IMR-90 (cell line): ENCODE measurements at regions of chr10 and their contacts with region 1.

Region 1: GRCh38 chr10:92880233-92880861 is 32.0 kb downstream of the EXOC6 start:
- DNase-seq: peak; percentile 63
- ATAC-seq: peak; percentile 92
- H3K4me3 ChIP-seq: no peak overlapping the region
- H3K27ac ChIP-seq: no peak overlapping the region
- H3K4me1 ChIP-seq: no peaks in the 10 kb centered on the region
- H3K27me3 ChIP-seq: no peaks in the 10 kb centered on the region
- CTCF ChIP-seq: peak; percentile 73
- POLR2A ChIP-seq: no peak
- RAD21 ChIP-seq: peak; percentile 74

Region 2: DNA sequence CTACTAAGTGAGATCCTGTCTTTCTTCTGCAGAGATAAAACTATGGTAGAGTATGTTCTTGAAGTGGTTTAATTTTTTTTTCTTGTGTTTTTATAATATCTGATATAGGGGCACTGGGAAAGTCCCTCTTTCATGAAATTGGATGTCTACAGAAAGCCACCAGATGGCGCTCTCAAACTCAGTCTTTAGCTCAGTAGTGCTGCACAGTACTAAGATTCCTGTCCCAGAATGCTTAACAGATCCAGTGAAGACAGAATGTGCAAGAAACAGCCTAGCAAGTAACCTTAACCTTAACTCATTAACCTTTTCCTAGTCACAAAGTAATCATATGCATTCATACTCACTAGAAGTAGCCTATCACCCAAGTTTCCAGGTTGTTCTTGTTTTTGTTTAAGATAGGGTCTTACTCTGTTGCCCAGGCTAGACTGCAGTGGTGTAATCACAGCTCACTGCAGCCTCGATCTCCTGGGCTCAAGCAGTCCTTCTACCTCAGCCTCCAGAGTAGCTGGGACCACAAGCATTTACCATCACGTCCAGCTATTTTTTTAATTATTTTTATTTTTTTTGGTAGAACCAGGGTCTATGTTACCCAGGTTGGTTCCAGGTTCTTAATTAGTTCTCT is 363.2 kb before region 1 on chr10:
- CTCF ChIA-PET with region 1: no interaction called
- POLR2A ChIA-PET with region 1: no interaction called
- dilution Hi-C with region 1: no loop called
- in situ Hi-C with region 1: loop called (anchors 10 kb)
- intact Hi-C with region 1: loop called (anchors 1 kb)
- DNase-seq: peak; percentile 80
- ATAC-seq: peak; percentile 90
- H3K4me3 ChIP-seq: no peak overlapping the region
- H3K27ac ChIP-seq: no peak overlapping the region
- H3K4me1 ChIP-seq: peaks cover 2% of the 10 kb centered on the region; the same call in 1 of the 2 replicates
- H3K27me3 ChIP-seq: no peaks in the 10 kb centered on the region
- CTCF ChIP-seq: peak; percentile 76
- POLR2A ChIP-seq: no peak
- RAD21 ChIP-seq: peak; percentile 68

Region 3: GRCh38 chr10:92689663-92690210 is 190.6 kb before region 1 on chr10 and contains the start of gene HHEX:
- CTCF ChIA-PET with region 1: no interaction called
- POLR2A ChIA-PET with region 1: no interaction called
- dilution Hi-C with region 1: no loop called
- in situ Hi-C with region 1: no loop called
- intact Hi-C with region 1: loop called (anchors 2 kb)
- DNase-seq: peak; percentile 76
- ATAC-seq: peak; percentile 94
- H3K4me3 ChIP-seq: peak within 1 kb of the TSS; percentile 95
- H3K27ac ChIP-seq: peak within 1 kb of the TSS; percentile 82
- H3K4me1 ChIP-seq: peaks cover 12% of the 10 kb centered on the region
- H3K27me3 ChIP-seq: no peaks in the 10 kb centered on the region
- CTCF ChIP-seq: no peak
- POLR2A ChIP-seq: peak; percentile 63
- RAD21 ChIP-seq: no peak
- total RNA-seq, gene HHEX: 2.3 and 4.4 TPM in 2 replicates

Region 4: DNA sequence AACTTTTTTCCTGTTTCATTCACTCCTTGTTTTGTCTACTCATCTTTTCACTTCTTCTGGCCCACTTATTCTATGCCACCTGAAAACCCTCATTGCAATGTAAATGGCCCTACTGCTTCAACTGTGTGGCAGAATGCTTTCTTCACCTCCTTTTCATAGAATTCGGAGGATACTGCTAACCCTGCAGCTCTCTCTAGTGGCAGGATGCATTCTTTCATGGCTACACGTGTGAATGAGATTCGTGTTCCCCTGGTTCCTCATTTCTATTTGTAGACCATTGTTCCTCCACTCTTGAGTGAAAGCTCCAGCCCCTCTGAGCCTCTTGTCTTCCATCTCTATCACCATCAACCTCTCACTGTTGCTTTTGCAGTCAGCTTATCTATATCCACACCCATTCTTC is 159.4 kb after region 1 on chr10:
- CTCF ChIA-PET with region 1: no interaction called
- POLR2A ChIA-PET with region 1: no interaction called
- dilution Hi-C with region 1: no loop called
- in situ Hi-C with region 1: no loop called
- intact Hi-C with region 1: loop called (anchors 1 kb)
- DNase-seq: peak; percentile 46
- ATAC-seq: peak; percentile 82
- H3K4me3 ChIP-seq: no peak overlapping the region
- H3K27ac ChIP-seq: no peak overlapping the region
- H3K4me1 ChIP-seq: no peaks in the 10 kb centered on the region; the same call in 1 of the 2 replicates
- H3K27me3 ChIP-seq: no peaks in the 10 kb centered on the region
- CTCF ChIP-seq: peak; percentile 69
- POLR2A ChIP-seq: no peak
- RAD21 ChIP-seq: peak; percentile 78

Region 5: DNA sequence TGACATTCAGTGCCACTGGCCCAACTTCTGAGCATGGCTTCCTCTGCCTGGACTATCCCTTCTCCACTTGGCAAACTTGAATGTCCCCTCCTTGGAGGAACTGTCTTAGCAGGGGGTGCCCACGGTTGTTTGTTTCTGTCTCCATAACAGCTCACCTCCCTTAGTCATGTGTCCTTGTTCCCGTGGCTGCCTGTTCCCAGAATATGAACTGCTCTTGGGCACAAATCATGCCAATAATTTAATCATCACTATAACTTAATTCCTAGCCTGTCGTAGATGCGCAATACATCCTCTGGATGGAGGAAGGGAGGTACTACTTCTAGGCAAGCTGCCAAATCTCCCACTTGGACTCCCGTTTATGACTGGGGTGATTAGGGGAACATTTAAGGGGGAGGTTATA is 428.7 kb after region 1 on chr10:
- CTCF ChIA-PET with region 1: no interaction called
- POLR2A ChIA-PET with region 1: no interaction called
- dilution Hi-C with region 1: no loop called
- in situ Hi-C with region 1: loop called (anchors 25 kb)
- intact Hi-C with region 1: no loop called
- DNase-seq: peak; percentile 22
- ATAC-seq: no peak
- H3K4me3 ChIP-seq: no peak overlapping the region
- H3K27ac ChIP-seq: no peak overlapping the region
- H3K4me1 ChIP-seq: no peaks in the 10 kb centered on the region; the same call in 1 of the 2 replicates
- H3K27me3 ChIP-seq: no peaks in the 10 kb centered on the region
- CTCF ChIP-seq: no peak
- POLR2A ChIP-seq: no peak
- RAD21 ChIP-seq: no peak

Region 6: DNA sequence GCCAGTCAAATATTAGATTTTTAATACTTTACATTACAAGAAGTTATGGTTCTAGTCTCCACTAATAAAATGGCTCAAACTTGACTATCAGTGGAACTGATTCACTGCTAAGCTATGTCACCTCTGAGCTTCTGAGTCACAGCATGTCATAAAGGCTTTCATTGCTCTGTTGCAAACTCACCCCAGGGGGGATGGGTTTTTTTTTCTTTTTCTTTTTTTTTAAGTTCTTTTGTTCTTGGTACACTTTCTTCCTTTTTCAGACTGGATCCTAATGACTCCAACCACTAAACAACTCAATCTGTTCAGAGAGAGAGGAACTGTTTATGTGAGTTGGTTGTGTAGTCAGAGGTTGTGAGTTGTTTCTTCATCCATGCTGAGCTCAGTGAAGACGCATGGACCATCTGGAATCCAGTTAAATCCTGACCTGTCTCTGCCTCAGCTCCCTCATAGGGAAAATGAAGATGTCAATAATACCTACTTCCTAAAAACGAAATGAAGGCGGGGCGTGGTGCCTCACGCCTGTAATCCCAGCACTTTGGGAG is 590.8 kb after region 1 on chr10:
- CTCF ChIA-PET with region 1: no interaction called
- POLR2A ChIA-PET with region 1: no interaction called
- dilution Hi-C with region 1: no loop called
- in situ Hi-C with region 1: no loop called
- intact Hi-C with region 1: no loop called
- DNase-seq: peak; percentile 97
- ATAC-seq: peak; percentile 55
- H3K4me3 ChIP-seq: no peak overlapping the region
- H3K27ac ChIP-seq: peak overlapping the region; percentile 99
- H3K4me1 ChIP-seq: peaks cover 37% of the 10 kb centered on the region
- H3K27me3 ChIP-seq: no peaks in the 10 kb centered on the region
- CTCF ChIP-seq: no peak
- POLR2A ChIP-seq: 0 out of 2 replicates have a peak, but pooled peaks have one; percentile 26
- RAD21 ChIP-seq: no peak

Region 7: DNA sequence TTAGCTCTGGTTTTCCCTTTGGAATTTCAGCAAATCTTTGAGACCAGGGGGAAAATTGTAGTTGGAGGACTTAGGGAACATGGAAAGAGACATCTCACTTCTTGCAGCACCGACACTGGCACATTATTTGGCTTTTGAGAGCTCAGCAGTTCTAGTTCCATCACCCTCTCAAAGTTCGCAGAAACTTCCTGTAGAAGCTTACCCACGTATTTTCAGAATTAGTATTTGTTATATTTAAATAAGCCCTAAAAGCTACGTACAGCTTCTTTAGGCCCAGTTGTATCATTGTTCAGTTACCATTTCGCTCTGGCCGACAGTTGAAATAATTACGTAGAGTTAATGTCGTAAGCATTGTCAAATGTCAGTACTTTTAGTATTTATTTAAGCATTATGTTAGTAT is 629.5 kb after region 1 on chr10:
- CTCF ChIA-PET with region 1: interaction called, 4 read pairs
- POLR2A ChIA-PET with region 1: no interaction called
- dilution Hi-C with region 1: no loop called
- in situ Hi-C with region 1: loop called (anchors 25 kb)
- intact Hi-C with region 1: loop called (anchors 2 kb)
- DNase-seq: no peak
- ATAC-seq: no peak
- H3K4me3 ChIP-seq: no peak overlapping the region
- H3K27ac ChIP-seq: no peak overlapping the region
- H3K4me1 ChIP-seq: peaks cover 5% of the 10 kb centered on the region
- H3K27me3 ChIP-seq: no peaks in the 10 kb centered on the region
- CTCF ChIP-seq: no peak
- POLR2A ChIP-seq: no peak
- RAD21 ChIP-seq: no peak